ENCODE measurements at regions of chr1 and their contacts with region 1.

Region 1: DNA sequence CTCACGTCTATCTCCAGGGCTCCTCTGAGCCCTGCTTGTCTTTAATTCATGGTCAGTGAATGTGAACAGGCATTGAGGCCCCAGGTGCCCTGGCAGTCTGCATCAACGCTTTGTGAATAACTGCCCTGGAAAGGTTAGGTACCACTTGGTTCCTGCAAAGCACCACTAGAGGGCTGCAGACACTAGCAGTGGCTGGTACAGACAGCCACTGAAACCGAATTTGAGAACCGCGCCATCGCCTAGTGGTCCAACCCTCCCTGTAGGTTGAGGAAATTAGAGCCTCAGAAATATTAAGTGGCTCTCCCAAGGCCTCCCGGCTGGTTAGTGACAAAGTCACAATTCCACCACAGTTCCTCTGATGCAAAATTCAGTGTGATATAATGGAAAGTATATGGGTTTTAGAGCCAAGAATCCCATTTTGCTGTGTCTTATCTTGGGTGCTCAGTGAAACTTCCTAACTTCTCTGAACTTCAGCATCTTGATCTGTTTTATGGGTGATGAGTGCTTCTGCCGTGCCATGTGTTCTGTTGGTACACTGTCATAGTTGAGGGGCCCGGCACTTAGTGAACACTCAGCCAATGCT is 46.2 kb upstream of the BCL9 start:
- H3K4me3 Mint-ChIP-seq: no peak overlapping the region
- H3K27ac Mint-ChIP-seq: no peak overlapping the region
- H3K4me1 Mint-ChIP-seq: no peaks in the 10 kb centered on the region
- H3K27me3 Mint-ChIP-seq: peaks cover 7% of the 10 kb centered on the region

Region 2: GRCh38 chr1:147409886-147410285 is 85.2 kb before region 1 on chr1:
- intact Hi-C with region 1: no loop called
- H3K4me3 Mint-ChIP-seq: no peak overlapping the region
- H3K27ac Mint-ChIP-seq: no peak overlapping the region
- H3K4me1 Mint-ChIP-seq: no peaks in the 10 kb centered on the region
- H3K27me3 Mint-ChIP-seq: peaks cover 7% of the 10 kb centered on the region

Region 3: GRCh38 chr1:147640553-147641165 is 145.6 kb after region 1 on chr1:
- intact Hi-C with region 1: loop called (anchors 1 kb)
- H3K4me3 Mint-ChIP-seq: no peak overlapping the region
- H3K27ac Mint-ChIP-seq: peak overlapping the region; percentile 64
- H3K4me1 Mint-ChIP-seq: peaks cover 63% of the 10 kb centered on the region
- H3K27me3 Mint-ChIP-seq: no peaks in the 10 kb centered on the region

Region 4: DNA sequence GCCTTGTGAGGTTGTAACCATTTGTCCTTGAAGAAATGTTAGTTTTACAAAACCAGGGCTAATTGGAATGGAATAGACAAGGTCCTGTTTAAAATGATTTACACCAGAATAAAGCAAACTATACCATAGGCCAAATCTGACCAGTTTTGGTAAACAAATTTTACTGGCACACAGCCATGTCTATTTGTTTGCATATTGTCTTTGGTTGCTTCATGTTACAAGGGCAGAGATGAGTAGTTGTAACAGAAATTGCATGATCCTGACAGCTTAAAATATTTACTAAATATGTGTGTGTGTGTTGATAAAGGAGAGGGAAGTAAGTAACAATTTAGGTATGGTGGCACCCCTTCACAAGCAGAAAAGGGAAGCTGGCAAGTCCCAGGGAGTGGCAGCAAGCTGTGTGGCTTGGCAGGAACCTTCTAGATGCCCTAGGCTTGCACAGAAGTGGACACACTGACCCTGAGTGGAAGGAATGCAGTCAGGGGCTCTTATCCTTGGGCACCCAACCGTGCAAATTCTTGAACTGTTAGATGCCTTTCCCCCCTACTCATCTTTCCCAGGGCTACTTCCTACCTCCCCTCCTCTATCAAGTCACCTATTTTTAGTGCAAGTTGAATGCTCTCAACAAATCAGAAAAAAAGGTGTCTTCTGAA is 156.2 kb after region 1 on chr1:
- intact Hi-C with region 1: no loop called
- H3K4me3 Mint-ChIP-seq: no peak overlapping the region
- H3K27ac Mint-ChIP-seq: no peak overlapping the region
- H3K4me1 Mint-ChIP-seq: peaks cover 22% of the 10 kb centered on the region
- H3K27me3 Mint-ChIP-seq: no peaks in the 10 kb centered on the region

Region 5: DNA sequence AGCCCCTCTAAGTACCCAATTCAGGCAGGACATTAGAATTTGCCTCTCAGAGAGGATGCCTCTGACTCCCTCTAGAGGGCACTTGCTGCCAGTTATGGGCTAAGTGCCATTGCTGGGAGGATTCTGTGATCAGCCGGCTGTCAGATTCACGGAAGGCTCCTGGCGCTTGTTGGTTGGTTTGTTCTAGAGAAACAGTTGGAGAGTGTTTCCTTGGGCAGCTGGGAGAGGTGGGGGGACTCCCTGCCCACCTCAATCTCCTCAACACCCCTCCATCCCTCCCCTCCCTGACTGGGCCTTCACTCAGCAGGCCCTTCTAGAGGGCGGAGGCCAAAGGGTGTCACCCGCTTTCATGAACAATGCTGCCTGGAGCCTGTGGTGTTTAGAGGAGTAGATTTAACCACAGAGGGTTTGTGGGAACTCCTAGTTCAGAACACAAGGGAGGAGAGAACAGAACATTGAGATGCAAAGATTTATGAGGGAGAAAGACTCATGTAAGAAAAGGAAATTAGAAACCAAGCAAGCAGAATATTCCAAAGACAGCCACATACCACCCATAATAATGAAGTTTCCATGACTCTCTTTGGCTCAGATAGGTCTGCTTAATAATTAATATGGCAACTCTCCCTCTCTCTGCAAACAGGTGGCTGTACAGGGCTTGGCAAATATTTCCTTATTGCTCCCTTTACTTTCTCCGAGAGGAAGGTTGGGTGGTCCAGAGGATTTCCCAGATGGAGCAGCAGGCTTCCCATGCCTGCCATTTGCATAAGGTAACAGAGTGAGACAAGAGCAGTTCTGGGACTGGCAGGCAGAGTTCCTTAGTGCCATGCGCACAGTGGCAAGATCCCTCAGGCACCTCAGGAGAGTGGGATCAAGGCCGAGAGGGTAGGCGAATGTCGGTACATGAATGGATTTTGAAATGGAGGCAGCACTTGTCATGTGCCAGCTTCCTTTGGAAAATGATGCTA is 205.2 kb after region 1 on chr1:
- intact Hi-C with region 1: loop called (anchors 1 kb)
- H3K4me3 Mint-ChIP-seq: no peak overlapping the region
- H3K27ac Mint-ChIP-seq: no peak overlapping the region
- H3K4me1 Mint-ChIP-seq: peaks cover 5% of the 10 kb centered on the region
- H3K27me3 Mint-ChIP-seq: peaks cover 13% of the 10 kb centered on the region

Region 6: DNA sequence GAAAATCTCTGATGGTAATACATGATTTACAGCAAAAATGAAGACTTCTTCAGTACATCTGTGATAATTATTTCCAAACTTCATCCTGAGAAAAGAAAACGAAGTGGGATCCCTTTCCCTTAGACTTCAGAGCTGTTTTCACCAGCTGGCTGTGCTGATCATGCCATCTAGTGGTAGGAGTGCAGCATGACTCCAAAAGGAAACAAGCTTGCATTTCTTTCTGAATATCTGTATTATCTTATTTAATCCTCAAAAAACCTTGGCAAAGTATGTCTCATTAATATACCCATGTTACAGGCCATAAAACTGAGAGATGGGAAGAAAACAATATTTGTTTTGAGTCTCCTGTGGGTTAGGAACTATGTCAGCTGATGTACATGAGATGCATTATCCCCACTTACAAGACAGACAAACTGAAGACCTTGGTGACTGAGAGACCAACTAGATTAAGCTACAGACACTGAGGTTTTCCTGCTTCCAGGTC is 397.7 kb after region 1 on chr1:
- intact Hi-C with region 1: loop called (anchors 1 kb)
- H3K4me3 Mint-ChIP-seq: no peak overlapping the region
- H3K27ac Mint-ChIP-seq: no peak overlapping the region
- H3K4me1 Mint-ChIP-seq: no peaks in the 10 kb centered on the region
- H3K27me3 Mint-ChIP-seq: peaks cover 4% of the 10 kb centered on the region